Adrenal gland (tissue), 19 donors: ENCODE measurements at regions of chr12 and their contacts with region 1.

Region 1: GRCh38 chr12:77433799-77434198 is 368.4 kb upstream of the E2F7 start:
- DNase-seq: no peak
- H3K4me3 ChIP-seq: no peak overlapping the region
- H3K27ac ChIP-seq: no peak overlapping the region
- H3K4me1 ChIP-seq: no peaks in the 10 kb centered on the region
- H3K27me3 ChIP-seq: no peaks in the 10 kb centered on the region
- CTCF ChIP-seq: no peak
- POLR2A ChIP-seq: no peak

Region 2: DNA sequence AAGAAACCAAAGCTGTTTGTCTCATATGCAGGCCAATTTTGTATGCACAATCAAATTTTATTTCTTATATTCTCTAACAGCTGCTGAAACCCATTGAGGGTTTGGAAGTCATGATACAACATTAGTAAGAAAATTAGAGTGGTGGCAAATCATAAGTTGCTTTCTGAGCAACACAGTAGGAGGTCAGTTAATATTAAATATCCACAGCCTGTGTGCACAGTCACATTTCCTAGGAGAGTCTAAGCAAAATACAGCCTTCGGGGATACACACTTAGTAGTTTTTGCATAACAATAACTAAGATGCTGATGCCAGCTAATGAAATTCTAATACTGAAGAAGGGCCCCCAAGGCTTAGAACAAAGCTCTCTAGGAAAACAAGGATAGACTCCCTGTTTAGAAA is 158.9 kb before region 1 on chr12:
- intact Hi-C with region 1: loop called in 1 of 2 experiments (anchors 5 kb)
- DNase-seq: no peak
- H3K4me3 ChIP-seq: no peak overlapping the region
- H3K27ac ChIP-seq: no peak overlapping the region
- H3K4me1 ChIP-seq: no peaks in the 10 kb centered on the region
- H3K27me3 ChIP-seq: no peaks in the 10 kb centered on the region
- CTCF ChIP-seq: no peak
- POLR2A ChIP-seq: no peak

Region 3: DNA sequence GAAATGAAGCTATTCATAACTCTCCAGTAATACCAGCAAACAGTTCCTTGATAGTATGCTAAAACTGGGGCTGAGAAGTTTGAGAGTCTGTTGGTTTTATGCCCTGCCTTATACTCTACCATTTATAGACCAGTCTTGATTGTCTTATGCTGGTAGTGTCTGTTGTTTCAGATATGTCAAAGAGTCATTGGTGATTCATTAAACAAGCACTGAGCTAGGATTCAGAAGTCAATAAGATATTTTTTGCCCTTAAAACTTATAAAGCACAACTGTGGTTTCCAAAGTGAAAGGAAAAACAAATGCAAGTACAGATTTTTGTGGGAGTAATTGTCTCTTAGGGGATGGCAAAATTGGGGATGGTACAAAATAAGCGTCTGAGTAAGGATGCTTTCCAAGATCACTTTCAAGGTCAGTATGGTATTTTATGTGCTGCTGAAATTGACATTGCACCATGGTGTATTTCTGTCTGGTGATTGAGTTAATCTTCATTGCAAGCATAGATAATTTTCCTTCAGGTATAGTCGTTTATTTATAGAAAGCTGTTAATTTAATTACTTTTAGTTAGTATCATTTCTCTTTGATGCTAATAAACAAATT is 78.9 kb before region 1 on chr12:
- intact Hi-C with region 1: no loop called
- DNase-seq: no peak
- H3K4me3 ChIP-seq: no peak overlapping the region
- H3K27ac ChIP-seq: no peak overlapping the region
- H3K4me1 ChIP-seq: no peaks in the 10 kb centered on the region
- H3K27me3 ChIP-seq: no peaks in the 10 kb centered on the region
- CTCF ChIP-seq: no peak
- POLR2A ChIP-seq: no peak

Region 4: DNA sequence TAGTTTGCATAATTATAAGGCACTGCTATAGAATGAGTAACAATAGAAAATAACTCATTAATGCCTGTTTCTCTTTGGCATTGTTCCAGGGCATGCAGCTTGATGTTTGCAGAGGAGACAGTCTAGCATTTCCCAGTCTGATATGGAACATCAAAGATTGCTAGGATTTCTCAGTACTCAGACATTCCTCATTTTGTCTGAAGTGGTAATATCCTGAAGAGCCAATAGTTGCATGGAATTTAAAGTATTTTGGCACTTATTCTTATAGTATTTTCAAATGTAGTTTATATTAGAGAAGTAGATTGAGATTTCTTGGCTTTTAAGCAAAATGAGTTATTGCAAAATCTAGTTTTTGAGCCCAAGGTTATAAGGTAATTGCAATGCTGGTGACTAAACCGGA is 31.1 kb before region 1 on chr12:
- intact Hi-C with region 1: no loop called
- DNase-seq: no peak
- H3K4me3 ChIP-seq: no peak overlapping the region
- H3K27ac ChIP-seq: no peak overlapping the region
- H3K4me1 ChIP-seq: no peaks in the 10 kb centered on the region
- H3K27me3 ChIP-seq: no peaks in the 10 kb centered on the region
- CTCF ChIP-seq: no peak
- POLR2A ChIP-seq: no peak

Region 5: GRCh38 chr12:78853231-78853630 is 1419.4 kb after region 1 on chr12:
- intact Hi-C with region 1: no loop called
- DNase-seq: no peak
- H3K4me3 ChIP-seq: no peak overlapping the region
- H3K27ac ChIP-seq: no peak overlapping the region
- H3K4me1 ChIP-seq: no peaks in the 10 kb centered on the region
- H3K27me3 ChIP-seq: no peaks in the 10 kb centered on the region
- CTCF ChIP-seq: no peak
- POLR2A ChIP-seq: no peak